PC-9 (cell line): ENCODE measurements at regions of chr1 and their contacts with region 1.

Region 1: DNA sequence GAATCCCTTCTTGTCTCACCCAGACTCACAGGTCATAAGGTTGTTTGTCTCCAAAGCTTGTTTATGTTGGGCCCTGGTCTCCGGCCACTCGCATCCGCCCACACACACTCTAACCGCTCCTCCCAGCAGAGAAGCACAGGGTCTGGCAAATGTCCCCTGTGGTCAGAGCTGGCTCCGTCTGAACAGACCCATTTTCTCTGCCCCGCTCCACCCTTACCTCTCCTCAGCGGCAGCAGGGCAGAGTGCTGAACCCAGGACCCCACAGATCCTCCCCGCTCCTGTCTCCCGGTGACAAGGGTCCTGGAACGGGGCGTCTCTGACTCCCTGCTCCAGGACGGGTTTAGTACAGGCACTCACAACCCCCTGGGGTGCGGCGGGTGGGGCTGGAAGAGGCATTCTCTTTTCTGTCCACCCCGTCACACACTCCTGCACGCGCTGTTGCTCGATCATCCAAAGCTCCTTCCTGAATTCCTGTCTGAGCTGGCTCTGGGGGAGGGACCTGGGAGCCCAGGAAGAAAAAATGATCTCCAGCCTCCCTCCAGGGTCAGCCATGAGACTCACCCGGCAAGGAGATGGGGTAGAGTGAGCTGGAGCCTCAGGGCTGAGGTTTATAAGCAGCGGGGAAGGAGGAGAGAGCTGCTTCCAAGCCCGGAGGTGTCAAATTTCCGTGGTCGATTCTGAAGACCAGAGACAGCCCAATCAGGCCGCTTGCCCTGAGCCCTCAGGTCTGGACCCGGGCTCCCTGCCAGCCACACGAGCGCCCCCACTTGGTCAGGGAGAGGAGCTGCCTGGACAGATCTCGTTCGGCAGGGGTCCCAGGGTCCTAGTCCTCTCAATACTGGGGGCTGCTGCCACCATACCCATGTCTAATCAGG is at the start of gene S100A13:
- DNase-seq: peak; percentile 91 to 95
- H3K4me3 ChIP-seq: peak within 1 kb of the TSS; percentile 69
- H3K27ac ChIP-seq: peak within 1 kb of the TSS; percentile 88
- H3K4me1 ChIP-seq: peaks cover 31% of the 10 kb centered on the region
- H3K27me3 ChIP-seq: no peaks in the 10 kb centered on the region
- CTCF ChIP-seq: peak; percentile 93
- total RNA-seq, gene S100A13: 120 and 144 TPM in 2 replicates

Region 2: DNA sequence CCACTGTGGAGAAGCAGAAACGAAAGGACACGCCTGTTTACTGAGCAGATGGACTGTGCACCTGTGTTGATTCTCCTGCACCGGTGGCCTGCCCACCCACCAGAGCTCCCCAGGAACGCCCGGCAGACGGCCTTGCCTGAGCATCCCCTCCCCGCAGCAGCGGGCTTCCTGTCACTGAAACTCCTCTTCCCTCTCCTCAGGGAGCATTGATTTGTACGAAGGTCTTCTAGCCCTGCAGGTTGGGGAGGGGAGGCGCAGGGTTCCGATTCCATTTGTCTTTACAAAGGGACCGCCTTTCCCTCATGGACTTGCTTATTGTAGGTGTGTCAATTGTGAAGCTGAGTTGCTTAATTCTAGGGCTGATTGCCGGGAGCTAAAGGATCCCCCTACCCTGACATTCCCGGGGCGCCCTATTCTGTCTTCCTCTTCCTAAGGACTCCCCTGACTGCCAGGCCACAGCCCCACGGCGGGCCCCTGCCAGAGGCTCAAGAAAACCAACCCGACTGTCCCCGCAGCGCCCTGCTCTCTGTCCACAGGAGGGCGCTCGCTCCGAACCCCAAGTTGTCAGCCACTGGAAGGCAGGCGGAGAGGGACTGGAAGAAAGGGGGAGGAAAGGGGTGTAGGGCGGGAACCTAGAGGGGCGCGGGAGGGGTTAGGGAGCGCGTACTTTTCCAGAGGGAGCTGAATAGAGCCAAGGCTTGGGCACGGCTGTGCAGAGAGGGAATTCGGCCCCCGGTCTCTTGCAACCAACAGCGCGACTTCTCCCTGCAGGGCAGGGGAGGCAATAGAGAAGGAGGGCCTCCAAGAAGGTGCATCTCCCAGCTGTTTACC is 94.2 kb before region 1 on chr1:
- CTCF ChIA-PET with region 1: no interaction called
- POLR2A ChIA-PET with region 1: no interaction called
- intact Hi-C with region 1: loop called (anchors 2 kb)
- DNase-seq: peak; percentile 53 to 85
- H3K4me3 ChIP-seq: peak overlapping the region; percentile 85; the same call in 1 of the 2 replicates
- H3K27ac ChIP-seq: peak overlapping the region; percentile 81
- H3K4me1 ChIP-seq: peaks cover 44% of the 10 kb centered on the region
- H3K27me3 ChIP-seq: no peaks in the 10 kb centered on the region
- CTCF ChIP-seq: peak; percentile 90

Region 3: DNA sequence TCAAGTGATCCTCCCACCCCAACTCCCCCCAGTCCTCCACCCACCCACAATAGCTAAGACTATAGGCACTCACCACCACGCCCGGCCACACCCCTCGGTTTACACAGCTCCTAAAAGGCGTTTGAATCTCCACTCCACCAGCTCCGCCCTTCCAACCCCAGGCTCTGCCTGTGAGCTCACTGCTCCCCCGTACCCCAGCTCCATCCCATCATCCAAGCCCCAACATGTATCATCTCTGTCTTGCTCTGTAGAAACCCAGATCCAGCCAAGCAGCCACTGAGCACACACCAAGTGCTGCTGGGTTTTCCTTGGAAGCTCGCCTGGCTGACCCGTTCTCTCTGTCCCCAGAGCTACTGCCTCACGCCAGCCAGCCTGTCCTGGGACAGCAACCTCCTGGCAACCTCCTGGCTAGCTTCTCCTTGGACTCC is 49.5 kb before region 1 on chr1:
- CTCF ChIA-PET with region 1: interaction called, 13 read pairs
- POLR2A ChIA-PET with region 1: interaction called, 15 read pairs
- intact Hi-C with region 1: loop called (anchors 1 kb)
- DNase-seq: no peak
- H3K4me3 ChIP-seq: no peak overlapping the region
- H3K27ac ChIP-seq: no peak overlapping the region
- H3K4me1 ChIP-seq: peaks cover 14% of the 10 kb centered on the region
- H3K27me3 ChIP-seq: no peaks in the 10 kb centered on the region
- CTCF ChIP-seq: no peak

Region 4: DNA sequence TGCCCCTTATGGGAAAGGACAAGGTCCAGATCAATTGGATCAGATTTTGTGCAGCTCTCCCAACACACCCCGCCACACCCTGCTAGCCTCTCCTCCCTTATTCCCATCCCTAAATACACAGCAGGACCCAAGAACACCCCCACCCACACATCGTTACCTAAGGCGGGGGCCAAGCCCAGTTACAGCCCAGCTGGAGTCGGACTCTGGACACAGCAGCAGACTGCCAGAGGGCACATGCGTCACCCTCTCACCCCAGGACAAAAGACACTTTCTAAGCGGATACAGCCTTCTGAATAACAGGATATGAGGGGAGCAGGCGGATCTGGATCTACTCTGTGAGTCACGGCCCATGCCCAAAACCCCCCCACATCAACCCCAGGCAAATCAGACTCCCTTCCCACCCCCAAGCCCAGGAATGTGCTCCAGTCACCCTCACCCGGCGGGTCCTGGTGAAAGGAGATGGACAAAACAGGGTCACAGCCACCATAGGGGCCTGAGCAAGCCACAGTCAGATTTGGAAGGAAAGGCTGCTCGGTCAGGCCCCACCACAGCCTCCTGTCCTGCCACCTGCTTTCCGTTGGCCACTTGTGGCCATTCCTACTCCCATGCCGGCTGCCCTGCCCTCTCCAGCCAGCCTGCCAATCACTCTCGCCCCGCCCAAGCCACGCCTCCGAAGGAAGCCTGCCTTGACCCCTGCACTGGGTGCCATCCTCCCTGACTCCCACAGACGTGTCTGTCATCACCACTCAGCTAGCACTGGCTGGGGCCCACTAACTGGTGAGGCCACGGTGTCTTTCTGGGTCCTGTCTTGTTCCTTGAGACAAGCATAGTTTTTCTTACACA is 18.2 kb before region 1 on chr1:
- CTCF ChIA-PET with region 1: interaction called, 19 read pairs
- POLR2A ChIA-PET with region 1: interaction called, 32 read pairs
- intact Hi-C with region 1: loop called (anchors 1 kb)
- DNase-seq: peak; percentile 94 to 98
- H3K4me3 ChIP-seq: peak overlapping the region; percentile 56
- H3K27ac ChIP-seq: peak overlapping the region; percentile 96
- H3K4me1 ChIP-seq: peaks cover 52% of the 10 kb centered on the region
- H3K27me3 ChIP-seq: no peaks in the 10 kb centered on the region
- CTCF ChIP-seq: no peak; the same call in 1 of the 2 replicates

Region 5: GRCh38 chr1:153698020-153698931 is 71.1 kb after region 1 on chr1:
- CTCF ChIA-PET with region 1: no interaction called
- POLR2A ChIA-PET with region 1: interaction called, 12 read pairs
- intact Hi-C with region 1: no loop called
- DNase-seq: no peak
- H3K4me3 ChIP-seq: no peak overlapping the region
- H3K27ac ChIP-seq: no peak overlapping the region
- H3K4me1 ChIP-seq: peaks cover 27% of the 10 kb centered on the region
- H3K27me3 ChIP-seq: no peaks in the 10 kb centered on the region
- CTCF ChIP-seq: no peak